Activated CD4-positive, alpha-beta T cell treated with anti-CD3 and anti-CD28 coated beads for 36 hours (primary cell): ENCODE measurements at regions of chr11 and their contacts with region 1.

Region 1: DNA sequence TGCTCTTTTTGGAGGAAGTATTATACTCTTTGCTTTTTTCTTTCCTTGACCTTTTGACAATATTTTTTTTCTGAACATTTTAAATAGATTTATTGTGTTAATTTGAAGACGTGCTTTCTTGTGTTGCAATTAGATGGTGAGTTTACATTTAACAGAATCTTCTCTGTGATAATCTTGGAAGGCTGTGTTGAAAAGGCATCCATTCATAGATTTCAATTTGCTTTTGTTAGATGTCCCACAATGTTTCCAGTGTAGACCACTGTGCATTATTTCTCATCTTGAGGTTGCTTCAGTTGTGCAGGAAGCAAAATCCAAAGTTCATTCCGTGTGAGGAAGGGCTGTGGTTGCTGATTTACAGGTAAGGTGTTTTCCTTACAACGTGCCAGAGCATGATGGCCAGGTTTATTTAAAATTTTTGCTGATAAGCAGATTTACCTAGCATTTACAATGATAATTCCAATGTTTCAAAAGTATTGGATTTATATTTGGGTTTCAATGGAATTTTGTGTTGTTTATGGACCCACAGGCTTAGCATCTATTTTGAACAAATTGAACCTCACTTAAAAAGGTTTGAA is 4.1 kb upstream of the OR5J2 start:
- DNase-seq: no peak
- ATAC-seq: no peak
- H3K4me3 Mint-ChIP-seq: no peak overlapping the region
- H3K27ac Mint-ChIP-seq: no peak overlapping the region
- H3K4me1 Mint-ChIP-seq: no peaks in the 10 kb centered on the region
- H3K27me3 Mint-ChIP-seq: no peaks in the 10 kb centered on the region

Region 2: GRCh38 chr11:55956521-55956920 is 215.8 kb before region 1 on chr11:
- CTCF ChIA-PET with region 1: no interaction called
- POLR2A ChIA-PET with region 1: no interaction called
- intact Hi-C with region 1: no loop called
- DNase-seq: no peak
- ATAC-seq: no peak
- H3K4me3 Mint-ChIP-seq: no peak overlapping the region
- H3K27ac Mint-ChIP-seq: no peak overlapping the region
- H3K4me1 Mint-ChIP-seq: no peaks in the 10 kb centered on the region
- H3K27me3 Mint-ChIP-seq: no peaks in the 10 kb centered on the region

Region 3: GRCh38 chr11:56122073-56122472 is 50.3 kb before region 1 on chr11 and contains the start of gene OR8H3:
- CTCF ChIA-PET with region 1: no interaction called
- POLR2A ChIA-PET with region 1: no interaction called
- intact Hi-C with region 1: loop called in 1 of 2 experiments (anchors 10 kb)
- DNase-seq: no peak
- ATAC-seq: no peak
- H3K4me3 Mint-ChIP-seq: no peak within 1 kb of the TSS
- H3K27ac Mint-ChIP-seq: no peak within 1 kb of the TSS
- H3K4me1 Mint-ChIP-seq: no peaks in the 10 kb centered on the region
- H3K27me3 Mint-ChIP-seq: no peaks in the 10 kb centered on the region
- total RNA-seq, gene OR8H3: not detected